ENCODE measurements at regions of chr7 and their contacts with region 1.

Region 1: DNA sequence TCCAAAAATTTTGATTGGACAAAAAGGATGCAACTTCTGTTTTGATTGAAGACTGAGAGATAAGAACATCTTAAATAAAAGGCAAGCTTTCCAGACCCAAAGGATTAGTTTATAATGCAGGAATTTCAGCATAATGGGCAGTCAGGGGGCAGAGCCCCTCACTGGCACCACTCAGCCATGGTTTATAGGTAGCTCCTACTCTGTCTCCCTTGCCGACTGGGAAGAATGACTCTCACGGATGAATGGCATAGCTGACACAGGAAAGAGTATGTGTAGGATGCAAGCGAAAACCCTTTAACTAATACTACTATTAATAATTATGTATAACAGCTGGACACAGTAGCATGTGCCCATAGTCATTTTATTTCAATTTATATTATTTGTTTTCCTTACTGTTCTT is 53.3 kb downstream of the GALNT11 start:
- DNase-seq: no peak
- H3K4me3 Mint-ChIP-seq: no peak overlapping the region
- H3K27ac Mint-ChIP-seq: no peak overlapping the region
- H3K4me1 Mint-ChIP-seq: peaks cover 44% of the 10 kb centered on the region
- H3K27me3 Mint-ChIP-seq: no peaks in the 10 kb centered on the region
- CTCF ChIP-seq: no peak

Region 2: GRCh38 chr7:151028131-151028947 is 1050.4 kb before region 1 on chr7 and contains the start of gene ABCB8:
- CTCF ChIA-PET with region 1: no interaction called
- intact Hi-C with region 1: no loop called
- DNase-seq: peak; percentile 99
- H3K4me3 Mint-ChIP-seq: peak within 1 kb of the TSS; percentile 82
- H3K27ac Mint-ChIP-seq: peak within 1 kb of the TSS; percentile 94
- H3K4me1 Mint-ChIP-seq: peaks cover 55% of the 10 kb centered on the region
- H3K27me3 Mint-ChIP-seq: no peaks in the 10 kb centered on the region
- CTCF ChIP-seq: peak; percentile 60
- total RNA-seq, gene ABCB8: 40.2 and 42.3 TPM in 2 replicates

Region 3: GRCh38 chr7:152054367-152055230 is 24.2 kb before region 1 on chr7:
- CTCF ChIA-PET with region 1: interaction called, 3 read pairs
- intact Hi-C with region 1: loop called (anchors 1 kb)
- DNase-seq: no peak
- H3K4me3 Mint-ChIP-seq: no peak overlapping the region
- H3K27ac Mint-ChIP-seq: no peak overlapping the region
- H3K4me1 Mint-ChIP-seq: peaks cover 19% of the 10 kb centered on the region
- H3K27me3 Mint-ChIP-seq: no peaks in the 10 kb centered on the region
- CTCF ChIP-seq: no peak

Region 4: GRCh38 chr7:152108359-152108758 is 29.6 kb after region 1 on chr7:
- CTCF ChIA-PET with region 1: no interaction called
- intact Hi-C with region 1: no loop called
- DNase-seq: no peak
- H3K4me3 Mint-ChIP-seq: no peak overlapping the region
- H3K27ac Mint-ChIP-seq: no peak overlapping the region
- H3K4me1 Mint-ChIP-seq: no peaks in the 10 kb centered on the region
- H3K27me3 Mint-ChIP-seq: no peaks in the 10 kb centered on the region
- CTCF ChIP-seq: no peak

Measured in Calu3 (cell line).